HepG2 (cell line): ENCODE measurements at regions of chr6 and their contacts with region 1.

Region 1: GRCh38 chr6:31862344-31863227 is at the start of gene NEU1:
- DNase-seq: peak; percentile 100
- ATAC-seq: peak; percentile 81
- H3K4me3 ChIP-seq: peak within 1 kb of the TSS; percentile 75 to 99 (median 84)
- H3K27ac ChIP-seq: peak within 1 kb of the TSS; percentile 92
- H3K4me1 ChIP-seq: peaks cover 68% of the 10 kb centered on the region
- H3K27me3 ChIP-seq: no peaks in the 10 kb centered on the region; a peak in 1 of 5 replicates
- CTCF ChIP-seq: peak; percentile 20
- EP300 ChIP-seq: peak in 1 of 2 experiments; percentile 49; a peak in 2 of 4 replicates
- POLR2A ChIP-seq: peak in 1 of 2 experiments; percentile 100; a peak in 2 of 4 replicates
- RAD21 ChIP-seq: peak; percentile 78
- total RNA-seq, gene NEU1: 139 and 297 TPM in 2 replicates

Region 2: DNA sequence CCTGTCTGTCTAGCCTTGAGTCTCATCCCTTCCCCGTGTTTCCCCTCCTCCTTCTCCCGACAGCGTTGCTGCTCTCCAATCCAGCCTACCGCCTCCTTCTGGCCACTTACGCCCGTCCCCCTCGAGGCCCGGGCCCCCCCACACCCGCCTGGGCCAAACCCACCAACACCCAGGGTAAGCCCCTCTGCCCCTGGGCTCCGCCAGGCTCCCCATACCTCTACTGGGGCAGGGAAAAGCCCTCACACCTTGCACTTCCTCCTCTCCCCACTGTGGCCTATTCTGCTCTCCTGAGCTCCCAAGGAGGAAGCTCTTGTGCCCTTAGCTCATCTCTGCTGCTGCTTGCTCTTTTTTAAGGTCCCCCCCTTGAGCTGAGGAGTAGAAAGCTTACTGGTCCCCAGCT is 967.2 kb before region 1 on chr6:
- CTCF ChIA-PET with region 1: no interaction called
- POLR2A ChIA-PET with region 1: no interaction called
- in situ Hi-C with region 1: no loop called
- intact Hi-C with region 1: no loop called
- DNase-seq: no peak
- ATAC-seq: no peak
- H3K4me3 ChIP-seq: no peak overlapping the region
- H3K27ac ChIP-seq: no peak overlapping the region
- H3K4me1 ChIP-seq: no peaks in the 10 kb centered on the region
- H3K27me3 ChIP-seq: no peaks in the 10 kb centered on the region
- CTCF ChIP-seq: no peak
- EP300 ChIP-seq: no peak
- POLR2A ChIP-seq: no peak
- RAD21 ChIP-seq: no peak

Region 3: GRCh38 chr6:31763619-31763940 is 99.0 kb before region 1 on chr6:
- CTCF ChIA-PET with region 1: no interaction called
- POLR2A ChIA-PET with region 1: interaction called, 13 read pairs
- in situ Hi-C with region 1: no loop called
- intact Hi-C with region 1: no loop called
- DNase-seq: peak; percentile 68
- ATAC-seq: peak; percentile 10
- H3K4me3 ChIP-seq: no peak overlapping the region
- H3K27ac ChIP-seq: no peak overlapping the region
- H3K4me1 ChIP-seq: peaks cover 47% of the 10 kb centered on the region
- H3K27me3 ChIP-seq: no peaks in the 10 kb centered on the region
- CTCF ChIP-seq: peak; percentile 77
- EP300 ChIP-seq: no peak
- POLR2A ChIP-seq: no peak
- RAD21 ChIP-seq: no peak

Region 4: GRCh38 chr6:31806465-31807272 is 55.9 kb before region 1 on chr6 and contains the start of gene LSM2:
- CTCF ChIA-PET with region 1: no interaction called
- POLR2A ChIA-PET with region 1: interaction called, 47 read pairs
- in situ Hi-C with region 1: no loop called
- intact Hi-C with region 1: no loop called
- DNase-seq: peak; percentile 96
- ATAC-seq: peak; percentile 92
- H3K4me3 ChIP-seq: peak within 1 kb of the TSS; percentile 82 to 90 (median 84)
- H3K27ac ChIP-seq: peak within 1 kb of the TSS; percentile 94
- H3K4me1 ChIP-seq: peaks cover 37% of the 10 kb centered on the region
- H3K27me3 ChIP-seq: no peaks in the 10 kb centered on the region
- CTCF ChIP-seq: peak; percentile 89
- EP300 ChIP-seq: peak in 1 of 2 experiments; percentile 43; a peak in 2 of 4 replicates
- POLR2A ChIP-seq: peak; percentile 75 to 89
- RAD21 ChIP-seq: peak; percentile 69
- total RNA-seq, gene LSM2: 90.5 and 93.7 TPM in 2 replicates

Region 5: GRCh38 chr6:31834434-31835198 is 28.0 kb before region 1 on chr6:
- CTCF ChIA-PET with region 1: interaction called, 3 read pairs
- POLR2A ChIA-PET with region 1: interaction called, 264 read pairs
- in situ Hi-C with region 1: no loop called
- intact Hi-C with region 1: loop called (anchors 2 kb)
- DNase-seq: peak; percentile 92
- ATAC-seq: peak; percentile 85
- H3K4me3 ChIP-seq: peak overlapping the region; percentile 75 to 98 (median 93)
- H3K27ac ChIP-seq: peak overlapping the region; percentile 93
- H3K4me1 ChIP-seq: peaks cover 56% of the 10 kb centered on the region
- H3K27me3 ChIP-seq: peaks cover 0 to 2% of the 10 kb centered on the region in 2 experiments; a peak in 1 of 5 replicates
- CTCF ChIP-seq: no peak
- EP300 ChIP-seq: no peak
- POLR2A ChIP-seq: peak; percentile 97 to 99
- RAD21 ChIP-seq: peak; percentile 28; the same call in 1 of the 2 replicates

Region 6: GRCh38 chr6:31901953-31902643 is 39.5 kb after region 1 on chr6 and contains the start of gene ZBTB12:
- CTCF ChIA-PET with region 1: no interaction called
- POLR2A ChIA-PET with region 1: interaction called, 41 read pairs
- in situ Hi-C with region 1: no loop called
- intact Hi-C with region 1: loop called (anchors 2 kb)
- DNase-seq: peak; percentile 96
- ATAC-seq: peak; percentile 76
- H3K4me3 ChIP-seq: peak within 1 kb of the TSS; percentile 65 to 78 (median 67)
- H3K27ac ChIP-seq: peak within 1 kb of the TSS; percentile 60
- H3K4me1 ChIP-seq: peaks cover 51% of the 10 kb centered on the region
- H3K27me3 ChIP-seq: peaks cover 1 to 13% of the 10 kb centered on the region in 2 experiments; a peak in 2 of 5 replicates
- CTCF ChIP-seq: peak; percentile 48
- EP300 ChIP-seq: peak in 1 of 2 experiments; percentile 30; a peak in 1 of 4 replicates
- POLR2A ChIP-seq: peak; percentile 58 to 78; a peak in 3 of 4 replicates
- RAD21 ChIP-seq: peak; percentile 88
- total RNA-seq, gene ZBTB12: 6.0 and 6.8 TPM in 2 replicates

Region 7: GRCh38 chr6:31952140-31952805 is 89.7 kb after region 1 on chr6:
- CTCF ChIA-PET with region 1: no interaction called
- POLR2A ChIA-PET with region 1: interaction called, 16 read pairs
- in situ Hi-C with region 1: no loop called
- intact Hi-C with region 1: no loop called
- DNase-seq: peak; percentile 71
- ATAC-seq: peak; percentile 88
- H3K4me3 ChIP-seq: no peak overlapping the region
- H3K27ac ChIP-seq: peak overlapping the region; percentile 27
- H3K4me1 ChIP-seq: peaks cover 38% of the 10 kb centered on the region
- H3K27me3 ChIP-seq: no peaks in the 10 kb centered on the region
- CTCF ChIP-seq: peak; percentile 93
- EP300 ChIP-seq: no peak
- POLR2A ChIP-seq: no peak
- RAD21 ChIP-seq: peak; percentile 97